GM12878 (cell line): ENCODE measurements at regions of chr1 and their contacts with region 1.

Region 1: DNA sequence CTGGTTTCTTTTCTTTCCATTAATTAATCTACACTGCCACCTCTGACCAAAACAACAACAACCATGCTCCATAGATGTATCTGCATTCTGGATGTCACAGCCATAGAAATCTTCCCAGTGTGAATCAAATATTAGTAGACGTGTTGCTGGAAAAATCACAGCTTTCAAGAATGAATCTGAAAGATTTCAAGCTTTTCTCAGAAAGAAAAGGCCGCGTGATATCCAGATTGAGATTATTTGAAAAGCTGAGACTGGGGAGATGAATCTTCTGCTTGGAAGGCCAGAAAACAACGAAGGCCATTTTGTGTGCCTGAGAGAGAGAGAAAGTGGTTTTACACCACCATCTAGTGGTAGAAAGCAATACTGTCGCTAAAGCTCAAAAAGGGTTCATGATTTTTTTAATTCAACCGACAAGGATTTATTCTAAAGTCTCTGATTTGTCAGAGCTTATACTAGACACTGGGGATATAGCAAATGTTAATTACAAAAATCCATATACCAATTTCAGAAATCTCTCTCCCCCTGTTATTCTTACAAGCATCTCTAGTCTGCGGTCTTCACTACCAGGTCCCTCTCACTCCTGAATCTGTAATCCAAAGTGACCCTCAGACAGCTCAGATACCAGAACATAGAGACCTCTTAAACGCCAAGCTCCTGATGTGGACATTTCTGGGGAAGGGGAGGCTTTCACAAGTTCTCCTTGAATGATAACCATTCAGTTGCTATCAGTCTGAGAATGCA is 87.5 kb upstream of the SGIP1 start:
- DNase-seq: peak; percentile 63
- ATAC-seq: peak; percentile 73
- H3K4me3 ChIP-seq: no peak overlapping the region
- H3K27ac ChIP-seq: peak overlapping the region; percentile 98
- H3K4me1 ChIP-seq: peaks cover 12% of the 10 kb centered on the region
- H3K27me3 ChIP-seq: no peaks in the 10 kb centered on the region
- CTCF ChIP-seq: peak; percentile 71 to 84 (median 78); a peak in 5 of 6 replicates
- EP300 ChIP-seq: no peak
- POLR2A ChIP-seq: no peak
- RAD21 ChIP-seq: peak; percentile 99

Region 2: DNA sequence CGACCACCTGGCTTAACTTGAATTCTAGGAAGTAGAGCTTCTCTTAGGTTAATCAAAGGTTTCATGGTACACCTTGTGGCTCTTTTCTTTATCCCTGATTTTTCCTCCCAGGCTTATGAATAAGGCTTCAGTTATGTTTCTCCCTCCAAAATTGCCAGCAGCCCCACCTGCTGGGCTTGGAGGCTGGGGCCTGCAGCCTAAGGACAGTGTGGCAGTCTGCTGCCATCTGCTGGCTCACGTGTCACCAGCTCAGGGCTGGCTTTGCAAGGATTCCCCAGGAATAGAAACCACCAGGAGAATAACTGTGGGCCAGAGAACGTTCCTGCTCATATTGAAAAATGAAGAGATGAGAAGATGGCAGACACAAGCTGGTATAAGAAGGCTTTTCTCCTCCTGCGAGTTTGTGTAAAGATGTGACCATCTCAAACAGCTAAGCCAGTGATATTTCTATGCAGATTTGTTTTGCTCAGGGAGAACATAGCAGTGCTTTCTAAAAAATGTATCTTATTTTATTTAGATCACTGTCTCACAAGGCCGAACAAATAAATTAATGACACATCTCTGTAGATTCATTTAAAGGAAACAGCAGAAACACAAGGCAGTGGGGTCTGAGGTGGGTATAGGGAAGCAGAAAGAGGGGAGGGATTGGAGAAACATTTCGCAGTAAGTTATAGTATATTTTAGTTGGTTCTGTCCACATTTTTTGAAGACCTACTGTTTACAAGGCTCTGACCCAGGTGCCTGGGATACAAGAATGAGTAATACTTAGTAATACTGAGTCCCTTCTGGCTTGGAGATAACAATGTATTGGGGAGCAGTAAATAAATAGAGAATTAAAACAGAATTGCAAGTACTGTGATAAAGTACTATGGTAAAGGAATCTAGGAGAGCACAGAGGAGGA is 203.5 kb before region 1 on chr1:
- CTCF ChIA-PET with region 1: interaction called, 595 read pairs
- POLR2A ChIA-PET with region 1: no interaction called
- RAD21 ChIA-PET with region 1: interaction called, 519 read pairs
- SMC1A ChIA-PET with region 1: interaction called, 663 read pairs
- in situ Hi-C with region 1: no loop called
- intact Hi-C with region 1: no loop called
- DNase-seq: no peak
- ATAC-seq: peak; percentile 86
- H3K4me3 ChIP-seq: no peak overlapping the region
- H3K27ac ChIP-seq: no peak overlapping the region
- H3K4me1 ChIP-seq: peaks cover 7% of the 10 kb centered on the region
- H3K27me3 ChIP-seq: 0 out of 4 replicates have a peak, but pooled peaks cover 0 to 1% of the 10 kb centered on the region in 2 experiments
- CTCF ChIP-seq: peak; percentile 99 to 100 (median 99); a peak in 5 of 6 replicates
- EP300 ChIP-seq: no peak
- POLR2A ChIP-seq: no peak
- RAD21 ChIP-seq: peak; percentile 97

Region 3: DNA sequence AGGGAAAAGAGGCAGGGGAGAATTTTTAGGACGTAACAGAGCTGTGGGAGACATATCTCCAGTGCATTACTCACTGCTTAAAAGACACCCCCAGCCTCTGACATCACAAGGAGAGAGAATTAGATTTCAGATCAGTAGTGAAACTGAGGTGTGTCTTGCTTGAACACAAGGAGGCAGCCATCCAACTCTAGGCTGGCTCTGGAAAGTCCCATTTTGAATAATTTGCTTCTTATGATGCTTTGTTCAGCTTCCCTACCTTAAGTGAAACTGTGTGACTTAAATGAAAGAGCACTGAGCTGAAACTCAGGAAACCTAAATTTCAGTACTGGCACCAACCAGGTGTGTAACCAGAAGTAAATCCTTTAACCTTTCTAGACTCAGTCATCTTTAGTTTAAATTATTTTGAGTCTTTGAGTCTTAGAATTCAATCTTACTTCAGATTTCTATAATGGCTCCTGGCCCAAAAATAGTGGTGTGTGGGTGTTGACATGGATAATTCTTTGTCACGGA is 164.0 kb before region 1 on chr1:
- CTCF ChIA-PET with region 1: interaction called, 30 read pairs
- POLR2A ChIA-PET with region 1: interaction called, 3 read pairs
- RAD21 ChIA-PET with region 1: interaction called, 35 read pairs
- SMC1A ChIA-PET with region 1: interaction called, 15 read pairs
- in situ Hi-C with region 1: no loop called
- intact Hi-C with region 1: loop called (anchors 2 kb)
- DNase-seq: peak; percentile 98
- ATAC-seq: peak; percentile 75
- H3K4me3 ChIP-seq: peak overlapping the region; percentile 18; the same call in 1 of the 2 replicates
- H3K27ac ChIP-seq: peak overlapping the region; percentile 97
- H3K4me1 ChIP-seq: peaks cover 49% of the 10 kb centered on the region
- H3K27me3 ChIP-seq: no peaks in the 10 kb centered on the region
- CTCF ChIP-seq: peak; percentile 21 to 52 (median 25); a peak in 4 of 6 replicates
- EP300 ChIP-seq: peak; percentile 98 to 99
- POLR2A ChIP-seq: no peak
- RAD21 ChIP-seq: peak; percentile 45; the same call in 1 of the 2 replicates

Region 4: DNA sequence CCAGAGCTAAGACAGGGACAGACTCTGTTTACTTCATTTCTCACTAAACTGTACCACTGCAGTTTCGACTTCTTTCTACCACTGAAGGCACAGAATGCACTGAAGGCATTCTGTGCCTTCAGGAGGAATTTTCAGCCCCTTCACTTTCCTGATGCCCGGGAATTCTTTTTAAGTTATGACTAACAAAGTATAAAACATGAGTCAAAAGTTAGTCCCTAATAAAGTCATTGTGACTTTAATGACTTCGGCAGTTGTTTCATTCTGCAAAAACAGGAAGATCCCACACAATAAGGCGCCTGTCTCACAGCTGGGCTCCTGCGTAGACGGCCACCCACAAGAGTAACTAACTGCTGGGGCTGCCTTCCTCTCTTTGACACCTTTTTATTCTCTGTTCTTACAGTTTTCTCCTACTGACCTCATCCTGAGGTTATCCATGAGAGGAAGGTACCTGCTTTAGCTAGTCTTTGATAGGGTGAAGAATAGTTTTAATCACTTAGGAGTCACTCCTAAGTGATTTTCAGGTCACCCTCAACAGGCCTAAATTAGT is 96.4 kb before region 1 on chr1:
- CTCF ChIA-PET with region 1: interaction called, 150 read pairs
- POLR2A ChIA-PET with region 1: interaction called, 3 read pairs
- RAD21 ChIA-PET with region 1: interaction called, 165 read pairs
- SMC1A ChIA-PET with region 1: interaction called, 178 read pairs
- in situ Hi-C with region 1: no loop called
- intact Hi-C with region 1: no loop called
- DNase-seq: no peak
- ATAC-seq: peak; percentile 64
- H3K4me3 ChIP-seq: peak overlapping the region; percentile 52; the same call in 1 of the 2 replicates
- H3K27ac ChIP-seq: peak overlapping the region; percentile 88
- H3K4me1 ChIP-seq: peaks cover 56% of the 10 kb centered on the region
- H3K27me3 ChIP-seq: no peaks in the 10 kb centered on the region
- CTCF ChIP-seq: no peak
- EP300 ChIP-seq: peak; percentile 98 to 99
- POLR2A ChIP-seq: 0 out of 2 replicates have a peak, but pooled peaks have one; percentile 31
- RAD21 ChIP-seq: no peak

Region 5: GRCh38 chr1:66386712-66387111 is 59.7 kb before region 1 on chr1:
- CTCF ChIA-PET with region 1: interaction called, 396 read pairs
- POLR2A ChIA-PET with region 1: no interaction called
- RAD21 ChIA-PET with region 1: interaction called, 25 read pairs
- SMC1A ChIA-PET with region 1: interaction called, 17 read pairs
- in situ Hi-C with region 1: no loop called
- intact Hi-C with region 1: no loop called
- DNase-seq: no peak
- ATAC-seq: no peak
- H3K4me3 ChIP-seq: no peak overlapping the region
- H3K27ac ChIP-seq: no peak overlapping the region
- H3K4me1 ChIP-seq: peaks cover 5% of the 10 kb centered on the region
- H3K27me3 ChIP-seq: no peaks in the 10 kb centered on the region
- CTCF ChIP-seq: no peak
- EP300 ChIP-seq: no peak
- POLR2A ChIP-seq: no peak
- RAD21 ChIP-seq: no peak

Region 6: GRCh38 chr1:66503841-66504470 is 57.5 kb after region 1 on chr1:
- CTCF ChIA-PET with region 1: interaction called, 20 read pairs
- POLR2A ChIA-PET with region 1: no interaction called
- RAD21 ChIA-PET with region 1: interaction called, 10 read pairs
- SMC1A ChIA-PET with region 1: interaction called, 20 read pairs
- in situ Hi-C with region 1: no loop called
- intact Hi-C with region 1: no loop called
- DNase-seq: no peak
- ATAC-seq: peak; percentile 89
- H3K4me3 ChIP-seq: no peak overlapping the region
- H3K27ac ChIP-seq: no peak overlapping the region
- H3K4me1 ChIP-seq: no peaks in the 10 kb centered on the region
- H3K27me3 ChIP-seq: 0 out of 4 replicates have a peak, but pooled peaks cover 0 to 1% of the 10 kb centered on the region in 2 experiments
- CTCF ChIP-seq: peak; percentile 57 to 69 (median 63)
- EP300 ChIP-seq: no peak
- POLR2A ChIP-seq: no peak
- RAD21 ChIP-seq: peak; percentile 56

Region 7: DNA sequence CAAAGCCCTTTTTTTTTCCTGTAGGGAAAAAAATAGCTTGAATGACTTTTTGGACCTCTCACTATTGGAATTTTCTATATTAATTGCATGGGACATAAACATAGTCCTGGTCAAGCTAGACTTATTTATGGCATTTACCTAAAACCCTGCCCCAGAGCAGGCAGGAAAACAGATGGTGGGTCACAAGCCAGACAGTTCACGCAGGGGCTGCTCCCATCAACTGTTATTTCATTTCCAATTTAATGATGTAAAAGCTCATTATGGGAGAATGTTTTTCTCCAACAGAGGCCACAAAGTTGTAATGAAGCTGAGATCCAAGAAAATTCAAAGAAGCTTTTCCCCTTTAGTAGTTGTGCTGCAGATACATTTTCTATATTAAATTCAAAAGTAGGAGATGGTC is 186.7 kb after region 1 on chr1:
- CTCF ChIA-PET with region 1: no interaction called
- POLR2A ChIA-PET with region 1: no interaction called
- RAD21 ChIA-PET with region 1: no interaction called
- SMC1A ChIA-PET with region 1: no interaction called
- in situ Hi-C with region 1: no loop called
- intact Hi-C with region 1: no loop called
- DNase-seq: no peak
- ATAC-seq: no peak
- H3K4me3 ChIP-seq: no peak overlapping the region
- H3K27ac ChIP-seq: no peak overlapping the region
- H3K4me1 ChIP-seq: no peaks in the 10 kb centered on the region
- H3K27me3 ChIP-seq: no peaks in the 10 kb centered on the region
- CTCF ChIP-seq: no peak
- EP300 ChIP-seq: no peak
- POLR2A ChIP-seq: no peak
- RAD21 ChIP-seq: no peak

Region 8: DNA sequence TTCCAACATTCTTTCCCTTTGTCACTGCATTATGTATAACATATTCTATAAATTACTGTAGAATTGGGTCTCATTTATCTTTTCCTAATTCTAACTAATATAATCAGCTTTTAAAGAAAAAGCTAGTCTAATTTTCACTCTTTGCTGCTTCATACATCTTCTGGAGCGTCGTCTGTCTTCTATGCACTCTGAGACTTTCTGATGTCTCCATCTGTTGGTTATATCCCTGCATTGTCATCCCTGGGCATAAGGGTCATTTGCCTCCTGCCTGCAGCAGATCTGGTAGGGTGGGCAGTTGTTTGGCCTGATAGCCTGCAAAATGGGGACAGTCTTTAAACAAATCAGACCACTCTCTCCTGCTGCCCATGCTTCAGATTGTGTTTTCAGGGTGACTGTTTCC is 265.0 kb after region 1 on chr1:
- CTCF ChIA-PET with region 1: no interaction called
- POLR2A ChIA-PET with region 1: no interaction called
- RAD21 ChIA-PET with region 1: no interaction called
- SMC1A ChIA-PET with region 1: no interaction called
- in situ Hi-C with region 1: no loop called
- intact Hi-C with region 1: no loop called
- DNase-seq: no peak
- ATAC-seq: no peak
- H3K4me3 ChIP-seq: no peak overlapping the region
- H3K27ac ChIP-seq: no peak overlapping the region
- H3K4me1 ChIP-seq: no peaks in the 10 kb centered on the region
- H3K27me3 ChIP-seq: no peaks in the 10 kb centered on the region
- CTCF ChIP-seq: 0 out of 6 replicates have a peak, but pooled peaks of 2 of the 3 experiments have one; percentile 13 to 16
- EP300 ChIP-seq: no peak
- POLR2A ChIP-seq: no peak
- RAD21 ChIP-seq: peak; percentile 30